K562 (cell line): ENCODE measurements at regions of chr14 and their contacts with region 1.

Region 1: GRCh38 chr14:36529062-36529461 is 9.0 kb upstream of the NKX2-1 start:
- DNase-seq: no peak
- ATAC-seq: no peak
- H3K4me3 ChIP-seq: no peak overlapping the region
- H3K27ac ChIP-seq: no peak overlapping the region
- H3K4me1 ChIP-seq: peaks cover 0 to 11% of the 10 kb centered on the region in 2 experiments; a peak in 1 of 5 replicates
- H3K27me3 ChIP-seq: peaks cover 0 to 7% of the 10 kb centered on the region in 2 experiments; a peak in 2 of 5 replicates
- CTCF ChIP-seq: no peak
- EP300 ChIP-seq: no peak
- POLR2A ChIP-seq: no peak
- RAD21 ChIP-seq: no peak

Region 2: DNA sequence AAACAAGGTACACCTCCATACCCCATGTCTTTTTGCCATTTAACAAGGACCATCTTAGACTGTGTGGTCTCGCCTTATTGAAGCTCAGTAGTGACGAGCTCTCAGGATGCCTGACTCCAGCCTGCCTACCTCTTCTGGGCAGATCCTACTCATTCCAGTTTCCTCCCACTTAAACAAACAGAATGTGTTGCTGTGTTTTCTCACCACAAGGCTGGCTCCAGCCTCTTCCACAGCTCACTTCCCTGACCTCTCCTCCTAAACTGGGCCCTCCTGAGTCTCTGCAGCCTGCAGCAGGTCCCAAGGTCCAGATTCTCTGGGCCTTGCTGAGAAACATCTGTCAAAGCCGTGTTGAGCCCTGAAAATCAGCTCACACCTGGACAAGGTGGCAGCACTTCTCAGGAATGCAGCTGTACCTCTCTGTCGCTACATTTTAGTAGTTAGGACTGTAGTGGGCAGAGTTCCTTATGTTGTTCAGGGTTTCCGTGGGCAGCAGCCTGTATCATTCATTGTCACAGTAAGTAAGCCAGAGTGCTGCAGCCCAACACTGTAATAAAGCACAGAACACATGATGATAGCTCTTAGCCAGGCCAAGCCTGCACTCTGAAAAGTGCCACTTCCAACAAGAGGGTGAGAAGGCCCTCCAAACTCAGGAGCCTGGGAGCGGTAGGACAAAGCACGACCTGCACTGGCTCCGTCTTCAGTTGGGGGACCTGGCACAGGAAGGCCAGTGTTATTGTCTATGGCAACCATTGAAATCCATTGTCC is 77.6 kb before region 1 on chr14:
- CTCF ChIA-PET with region 1: no interaction called
- POLR2A ChIA-PET with region 1: no interaction called
- in situ Hi-C with region 1: no loop called
- intact Hi-C with region 1: loop called (anchors 2 kb)
- DNase-seq: no peak
- ATAC-seq: no peak
- H3K4me3 ChIP-seq: no peak overlapping the region
- H3K27ac ChIP-seq: no peak overlapping the region
- H3K4me1 ChIP-seq: no peaks in the 10 kb centered on the region
- H3K27me3 ChIP-seq: no peaks in the 10 kb centered on the region; a peak in 1 of 5 replicates
- CTCF ChIP-seq: no peak
- EP300 ChIP-seq: no peak
- POLR2A ChIP-seq: no peak
- RAD21 ChIP-seq: no peak

Region 3: GRCh38 chr14:36617824-36618223 is 88.8 kb after region 1 on chr14:
- CTCF ChIA-PET with region 1: no interaction called
- POLR2A ChIA-PET with region 1: no interaction called
- in situ Hi-C with region 1: no loop called
- intact Hi-C with region 1: no loop called
- DNase-seq: no peak
- ATAC-seq: no peak; the same call in 2 of the 3 replicates
- H3K4me3 ChIP-seq: no peak overlapping the region
- H3K27ac ChIP-seq: no peak overlapping the region
- H3K4me1 ChIP-seq: no peaks in the 10 kb centered on the region
- H3K27me3 ChIP-seq: no peaks in the 10 kb centered on the region
- CTCF ChIP-seq: no peak
- EP300 ChIP-seq: no peak
- POLR2A ChIP-seq: no peak
- RAD21 ChIP-seq: no peak